Psoas muscle (tissue), 8 donors: ENCODE measurements at regions of chr1 and their contacts with region 1.

Region 1: GRCh38 chr1:100757946-100758345 is 38.4 kb downstream of the VCAM1 start:
- DNase-seq: no peak
- ATAC-seq: no peak
- H3K4me3 ChIP-seq: no peak overlapping the region
- H3K27ac ChIP-seq: no peak overlapping the region
- H3K4me1 ChIP-seq: no peaks in the 10 kb centered on the region
- H3K27me3 ChIP-seq: no peaks in the 10 kb centered on the region
- CTCF ChIP-seq: no peak

Region 2: GRCh38 chr1:100847361-100848082 is 89.6 kb after region 1 on chr1:
- intact Hi-C with region 1: no loop called
- DNase-seq: no peak
- ATAC-seq: no peak
- H3K4me3 ChIP-seq: peak overlapping the region; percentile 34
- H3K27ac ChIP-seq: no peak overlapping the region
- H3K4me1 ChIP-seq: no peaks in the 10 kb centered on the region
- H3K27me3 ChIP-seq: no peaks in the 10 kb centered on the region
- CTCF ChIP-seq: no peak

Region 3: GRCh38 chr1:101738475-101738874 is 980.5 kb after region 1 on chr1:
- intact Hi-C with region 1: loop called in 1 of 2 experiments (anchors 5 kb)
- DNase-seq: no peak
- ATAC-seq: no peak
- H3K4me3 ChIP-seq: no peak overlapping the region
- H3K27ac ChIP-seq: no peak overlapping the region
- H3K4me1 ChIP-seq: no peaks in the 10 kb centered on the region
- H3K27me3 ChIP-seq: no peaks in the 10 kb centered on the region
- CTCF ChIP-seq: no peak